PC-9 (cell line): ENCODE measurements at regions of chr17 and their contacts with region 1.

Region 1: GRCh38 chr17:75904749-75905521 is at the start of gene MRPL38:
- DNase-seq: peak; percentile 86 to 99
- H3K4me3 ChIP-seq: peak within 1 kb of the TSS; percentile 76
- H3K27ac ChIP-seq: peak within 1 kb of the TSS; percentile 56
- H3K4me1 ChIP-seq: peaks cover 12% of the 10 kb centered on the region
- H3K27me3 ChIP-seq: no peaks in the 10 kb centered on the region
- CTCF ChIP-seq: peak; percentile 96
- total RNA-seq, gene MRPL38: 127 and 136 TPM in 2 replicates

Region 2: DNA sequence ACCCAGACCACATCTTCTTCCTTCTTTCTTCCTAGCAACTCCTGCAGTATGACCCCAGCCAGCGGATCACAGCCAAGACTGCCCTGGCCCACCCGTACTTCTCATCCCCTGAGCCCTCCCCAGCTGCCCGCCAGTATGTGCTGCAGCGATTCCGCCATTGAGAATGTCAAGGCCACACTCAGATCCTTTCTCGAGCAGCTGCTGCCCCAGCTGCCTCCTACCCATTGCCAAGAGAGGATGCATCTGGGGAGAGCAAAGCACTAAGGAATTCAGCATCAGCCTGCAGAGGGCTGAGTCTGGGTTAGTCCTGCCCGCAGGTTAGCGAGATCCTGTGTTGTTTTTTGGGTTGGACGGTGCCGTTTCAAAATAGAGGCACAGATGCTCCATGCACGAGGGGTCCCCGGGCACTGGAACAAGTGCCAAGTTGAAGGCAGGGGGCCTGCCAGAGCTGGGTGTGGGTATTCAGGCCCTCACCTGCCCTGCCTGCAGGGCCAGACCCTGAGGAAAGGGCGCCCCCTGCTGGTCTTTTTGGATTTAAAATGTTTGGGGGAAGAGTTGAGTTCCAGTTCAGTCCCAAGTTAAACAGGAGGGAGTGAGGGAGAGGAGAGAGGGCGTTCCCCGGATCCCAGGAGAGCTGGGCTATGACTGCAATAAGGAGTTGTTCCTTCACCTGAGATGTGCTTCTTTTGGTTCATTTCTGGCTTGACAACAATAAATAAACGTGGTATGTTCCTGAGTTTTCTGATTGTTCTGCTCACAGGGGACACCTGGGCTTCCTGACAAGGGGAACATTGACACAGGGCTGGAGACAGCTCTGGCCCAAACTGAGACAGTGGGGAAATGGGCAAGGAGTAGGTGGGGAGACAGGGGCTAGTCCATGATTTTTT is 100.6 kb after region 1 on chr17:
- CTCF ChIA-PET with region 1: interaction called, 21 read pairs
- POLR2A ChIA-PET with region 1: no interaction called
- intact Hi-C with region 1: loop called (anchors 1 kb)
- DNase-seq: peak; percentile 55 to 82
- H3K4me3 ChIP-seq: no peak overlapping the region
- H3K27ac ChIP-seq: no peak overlapping the region
- H3K4me1 ChIP-seq: no peaks in the 10 kb centered on the region; the same call in 1 of the 2 replicates
- H3K27me3 ChIP-seq: no peaks in the 10 kb centered on the region
- CTCF ChIP-seq: peak; percentile 93

Region 3: GRCh38 chr17:76103274-76104139 is 198.6 kb after region 1 on chr17 and contains the start of gene EXOC7:
- CTCF ChIA-PET with region 1: no interaction called
- POLR2A ChIA-PET with region 1: no interaction called
- intact Hi-C with region 1: loop called (anchors 10 kb)
- DNase-seq: peak; percentile 69 to 92
- H3K4me3 ChIP-seq: peak within 1 kb of the TSS; percentile 86
- H3K27ac ChIP-seq: peak within 1 kb of the TSS; percentile 73
- H3K4me1 ChIP-seq: peaks cover 7% of the 10 kb centered on the region
- H3K27me3 ChIP-seq: no peaks in the 10 kb centered on the region
- CTCF ChIP-seq: no peak; the same call in 1 of the 2 replicates
- total RNA-seq, gene EXOC7: 118 and 131 TPM in 2 replicates

Region 4: GRCh38 chr17:76278952-76279741 is 374.2 kb after region 1 on chr17:
- CTCF ChIA-PET with region 1: no interaction called
- POLR2A ChIA-PET with region 1: no interaction called
- intact Hi-C with region 1: loop called (anchors 10 kb)
- DNase-seq: peak; percentile 47 to 83
- H3K4me3 ChIP-seq: no peak overlapping the region
- H3K27ac ChIP-seq: no peak overlapping the region
- H3K4me1 ChIP-seq: peaks cover 15% of the 10 kb centered on the region
- H3K27me3 ChIP-seq: no peaks in the 10 kb centered on the region
- CTCF ChIP-seq: peak; percentile 94

Region 5: GRCh38 chr17:77609553-77610517 is 1704.9 kb after region 1 on chr17:
- CTCF ChIA-PET with region 1: no interaction called
- POLR2A ChIA-PET with region 1: no interaction called
- intact Hi-C with region 1: no loop called
- DNase-seq: no peak
- H3K4me3 ChIP-seq: no peak overlapping the region
- H3K27ac ChIP-seq: no peak overlapping the region
- H3K4me1 ChIP-seq: no peaks in the 10 kb centered on the region
- H3K27me3 ChIP-seq: peaks cover 85% of the 10 kb centered on the region
- CTCF ChIP-seq: no peak